ENCODE measurements at regions of chr2 and their contacts with region 1.

Region 1: DNA sequence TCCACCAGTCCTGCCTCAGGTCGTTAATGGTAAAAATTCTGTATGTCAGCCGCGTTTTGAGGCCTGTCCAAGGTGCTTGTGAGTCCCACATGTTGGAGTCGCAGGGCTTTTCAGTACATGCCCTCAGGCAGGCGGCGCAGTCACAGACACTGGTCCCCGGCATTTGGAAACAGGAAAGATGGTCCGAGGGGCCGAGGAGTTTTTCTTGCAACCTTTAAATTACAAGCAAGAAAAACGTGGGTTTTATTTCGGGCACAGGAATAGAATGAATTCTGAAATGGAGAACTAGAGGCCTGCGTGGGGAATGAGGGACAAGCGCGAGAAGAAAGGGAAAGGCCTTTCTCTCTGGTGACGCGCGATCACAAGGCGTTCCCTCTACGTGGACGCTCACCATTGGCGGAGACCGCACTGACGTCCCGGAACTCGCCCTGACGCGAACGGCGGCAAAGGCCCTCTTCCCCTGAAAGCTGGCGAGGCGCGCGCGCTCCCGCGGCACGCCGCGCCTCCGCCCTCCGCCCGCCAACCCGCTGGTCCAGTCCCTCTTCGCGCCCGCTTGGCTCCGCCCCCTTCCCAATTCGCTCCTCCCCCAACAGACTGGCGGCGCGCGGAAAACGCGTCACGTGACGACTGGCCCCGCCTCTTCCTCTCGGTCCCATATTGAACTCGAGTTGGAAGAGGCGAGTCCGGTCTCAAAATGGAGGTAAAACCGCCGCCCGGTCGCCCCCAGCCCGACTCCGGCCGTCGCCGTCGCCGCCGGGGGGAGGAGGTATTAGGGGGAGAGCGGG is at the start of gene HNRNPA3:
- DNase-seq: peak; percentile 100
- H3K4me3 Mint-ChIP-seq: peak within 1 kb of the TSS; percentile 94
- H3K27ac Mint-ChIP-seq: peak within 1 kb of the TSS; percentile 98
- H3K4me1 Mint-ChIP-seq: peaks cover 40% of the 10 kb centered on the region
- H3K27me3 Mint-ChIP-seq: no peaks in the 10 kb centered on the region
- total RNA-seq, gene HNRNPA3: 333 and 336 TPM in 2 replicates

Region 2: GRCh38 chr2:176931588-176932563 is 280.4 kb before region 1 on chr2:
- intact Hi-C with region 1: loop called (anchors 5 kb)
- DNase-seq: peak; percentile 80
- H3K4me3 Mint-ChIP-seq: peak overlapping the region; percentile 37
- H3K27ac Mint-ChIP-seq: peak overlapping the region; percentile 85
- H3K4me1 Mint-ChIP-seq: peaks cover 15% of the 10 kb centered on the region
- H3K27me3 Mint-ChIP-seq: no peaks in the 10 kb centered on the region

Region 3: DNA sequence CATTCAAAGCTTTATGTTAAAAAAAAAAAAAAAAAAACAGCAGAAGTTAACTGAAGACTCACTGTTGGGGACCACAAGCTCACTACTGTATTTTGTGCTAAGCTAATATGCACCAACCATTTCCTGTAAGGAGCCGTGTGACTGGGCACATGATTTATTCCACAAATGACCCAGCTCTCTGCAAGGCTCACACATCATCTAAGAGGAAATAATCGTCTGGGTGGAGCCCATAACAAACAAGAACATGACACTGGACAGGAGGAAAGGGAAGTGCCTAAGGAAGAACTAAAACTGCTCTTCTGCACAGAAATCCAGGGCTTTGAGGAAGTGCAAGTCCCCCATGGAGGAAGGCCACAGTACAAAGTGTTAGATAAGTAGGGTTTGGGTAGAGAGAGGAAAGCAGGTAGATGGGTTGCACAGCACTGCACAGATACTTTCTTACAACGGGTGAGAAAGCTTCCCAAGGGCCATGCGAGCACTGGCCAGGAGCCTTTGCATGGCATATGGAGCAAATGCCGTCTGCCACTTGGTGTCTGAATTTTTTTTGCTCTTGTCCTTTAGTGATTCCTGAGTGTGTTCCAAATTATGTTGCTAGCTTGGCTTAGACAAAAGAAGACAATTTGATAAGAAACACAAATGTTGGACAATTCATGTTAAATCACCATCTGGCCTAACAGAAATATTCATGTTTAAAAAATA is 27.8 kb after region 1 on chr2:
- intact Hi-C with region 1: loop called (anchors 2 kb)
- DNase-seq: peak; percentile 76
- H3K4me3 Mint-ChIP-seq: peak overlapping the region; percentile 63
- H3K27ac Mint-ChIP-seq: peak overlapping the region; percentile 85
- H3K4me1 Mint-ChIP-seq: peaks cover 57% of the 10 kb centered on the region
- H3K27me3 Mint-ChIP-seq: no peaks in the 10 kb centered on the region

Region 4: DNA sequence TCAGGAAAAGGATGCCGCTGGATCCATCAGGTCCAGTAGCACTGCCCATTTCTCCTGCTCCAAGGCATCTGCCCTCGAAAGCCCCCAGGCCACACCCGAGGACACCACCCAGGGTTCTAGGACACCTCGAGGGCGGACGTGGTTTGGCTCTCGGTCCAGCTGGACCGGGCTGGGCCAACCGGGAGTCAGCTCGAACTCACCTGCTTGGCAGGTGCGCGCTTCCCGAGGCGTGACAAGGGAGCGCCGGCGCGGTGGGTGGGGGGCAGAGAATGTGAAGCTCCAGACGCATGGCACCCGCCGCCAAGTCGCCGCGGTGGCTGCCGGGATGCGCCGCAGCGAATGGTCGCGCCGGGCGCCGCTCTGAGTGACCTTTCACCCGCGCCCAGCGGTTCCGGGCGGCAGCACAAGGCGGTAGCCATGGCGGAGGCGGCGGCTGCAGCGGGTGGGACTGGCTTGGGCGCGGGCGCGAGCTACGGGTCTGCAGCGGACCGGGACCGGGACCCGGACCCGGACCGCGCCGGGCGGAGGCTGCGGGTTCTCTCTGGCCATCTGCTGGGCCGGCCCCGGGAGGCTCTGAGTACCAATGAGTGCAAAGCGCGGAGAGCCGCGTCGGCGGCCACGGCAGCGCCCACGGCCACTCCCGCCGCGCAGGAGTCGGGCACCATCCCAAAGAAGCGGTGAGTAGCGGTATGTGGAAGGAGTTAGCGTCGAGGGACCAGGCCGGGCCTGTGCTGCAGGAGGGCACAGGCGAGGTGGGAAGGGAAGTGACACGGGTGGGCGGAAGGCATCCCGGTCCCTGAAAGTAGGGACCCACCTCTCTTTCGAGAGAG is 180.3 kb after region 1 on chr2 and contains the start of gene AGPS:
- intact Hi-C with region 1: loop called (anchors 1 kb)
- DNase-seq: peak; percentile 95
- H3K4me3 Mint-ChIP-seq: peak within 1 kb of the TSS; percentile 91
- H3K27ac Mint-ChIP-seq: peak within 1 kb of the TSS; percentile 95
- H3K4me1 Mint-ChIP-seq: peaks cover 54% of the 10 kb centered on the region
- H3K27me3 Mint-ChIP-seq: no peaks in the 10 kb centered on the region
- total RNA-seq, gene AGPS: 74.0 and 76.7 TPM in 2 replicates

Region 5: GRCh38 chr2:177618255-177619253 is 406.3 kb after region 1 on chr2:
- intact Hi-C with region 1: loop called (anchors 2 kb)
- DNase-seq: peak; percentile 98
- H3K4me3 Mint-ChIP-seq: peak overlapping the region; percentile 92
- H3K27ac Mint-ChIP-seq: peak overlapping the region; percentile 97
- H3K4me1 Mint-ChIP-seq: peaks cover 8% of the 10 kb centered on the region
- H3K27me3 Mint-ChIP-seq: peaks cover 24% of the 10 kb centered on the region